Adrenal gland (tissue), 19 donors: ENCODE measurements at regions of chr7 and their contacts with region 1.

Region 1: DNA sequence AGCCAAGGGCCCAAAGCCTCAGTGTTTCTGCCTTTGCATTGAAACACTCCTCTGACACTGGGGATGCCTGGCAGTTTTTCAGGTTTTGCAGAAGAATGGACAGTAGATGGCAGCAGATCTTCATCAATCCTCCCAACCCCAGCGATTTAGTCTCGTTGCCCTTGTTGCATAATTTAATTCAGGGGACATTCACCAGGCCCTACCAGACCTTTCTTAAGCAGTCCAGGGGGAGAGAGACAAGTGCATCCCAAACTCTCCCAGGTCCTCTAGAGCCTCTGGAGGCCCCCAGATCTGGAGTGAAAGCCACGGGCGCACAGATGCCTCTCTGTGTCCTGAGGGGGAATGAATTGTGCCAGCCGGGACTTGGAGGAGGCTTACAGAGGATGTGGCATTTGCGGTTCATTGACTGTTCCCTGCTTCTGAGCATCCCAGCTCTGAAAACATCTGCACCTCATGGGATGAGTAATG is 29.6 kb downstream of the MINDY4 start:
- DNase-seq: peak; percentile 60 to 86 (median 65)
- H3K4me3 ChIP-seq: no peak overlapping the region
- H3K27ac ChIP-seq: peak overlapping the region in 2 of 5 donors; percentile 6 to 34
- H3K4me1 ChIP-seq: peaks cover 0 to 16% of the 10 kb centered on the region in 2 donors
- H3K27me3 ChIP-seq: no peaks in the 10 kb centered on the region
- CTCF ChIP-seq: peak; percentile 38 to 84 (median 78)
- POLR2A ChIP-seq: no peak

Region 2: DNA sequence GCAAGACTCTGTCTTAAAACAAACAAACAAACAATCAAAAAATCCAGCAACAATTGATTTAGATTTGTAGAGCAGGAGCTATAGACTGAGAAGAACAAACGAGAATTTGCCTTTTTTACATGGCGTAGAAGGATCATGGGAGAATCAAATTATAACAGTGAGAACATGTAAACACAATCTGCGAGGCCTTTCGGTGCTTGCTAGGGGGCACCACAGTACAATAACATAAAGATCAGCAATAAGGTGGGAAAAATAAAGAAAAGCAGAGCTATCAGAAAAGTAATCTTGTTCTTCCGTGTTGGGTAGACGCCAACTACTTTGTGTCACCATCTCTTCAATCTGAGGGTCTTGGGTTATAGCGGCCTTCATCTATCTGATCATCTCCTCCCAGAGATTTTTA is 404.4 kb before region 1 on chr7:
- intact Hi-C with region 1: no loop called
- DNase-seq: no peak
- H3K4me3 ChIP-seq: no peak overlapping the region
- H3K27ac ChIP-seq: no peak overlapping the region
- H3K4me1 ChIP-seq: no peaks in the 10 kb centered on the region
- H3K27me3 ChIP-seq: no peaks in the 10 kb centered on the region
- CTCF ChIP-seq: peak in 2 of 6 experiments; percentile 7 to 11
- POLR2A ChIP-seq: no peak

Region 3: GRCh38 chr7:30938435-30939316 is 137.9 kb after region 1 on chr7:
- intact Hi-C with region 1: loop called in 1 of 2 experiments (anchors 10 kb)
- DNase-seq: peak; percentile 67 to 92 (median 78)
- H3K4me3 ChIP-seq: no peak overlapping the region
- H3K27ac ChIP-seq: no peak overlapping the region
- H3K4me1 ChIP-seq: no peaks in the 10 kb centered on the region
- H3K27me3 ChIP-seq: peaks cover 5% of the 10 kb centered on the region
- CTCF ChIP-seq: peak; percentile 77 to 98 (median 87)
- POLR2A ChIP-seq: no peak

Region 4: DNA sequence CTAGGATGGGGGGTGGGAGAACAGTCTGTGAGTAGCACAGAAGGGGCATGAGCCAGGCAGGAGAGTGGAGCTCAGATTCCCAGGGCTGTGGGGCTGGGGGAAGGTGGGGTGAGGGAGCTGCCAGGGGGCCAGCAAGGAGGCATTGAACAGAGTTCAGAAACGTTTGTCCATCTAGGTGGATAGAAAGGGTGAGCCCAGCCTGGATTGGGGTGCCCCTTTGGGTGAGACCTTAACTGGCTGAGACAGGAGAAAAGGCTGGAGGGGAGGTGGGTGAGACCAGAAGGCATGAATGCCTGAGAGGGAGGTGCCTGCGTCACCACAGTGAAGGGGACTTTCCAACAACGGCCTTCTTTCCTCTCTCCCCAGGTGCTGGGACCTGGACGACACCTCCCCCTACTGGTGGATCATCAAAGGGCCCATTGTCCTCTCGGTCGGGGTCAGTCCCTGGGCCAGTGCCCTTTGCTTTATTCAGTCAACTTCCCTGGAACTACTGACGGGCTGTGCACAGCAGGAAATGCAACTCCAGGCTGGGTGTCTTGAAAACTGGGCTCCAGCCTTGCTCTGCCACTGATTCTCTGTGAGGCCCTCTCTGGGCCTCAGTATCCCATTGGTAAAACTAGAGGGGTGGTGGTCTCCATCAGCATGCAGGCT is 173.9 kb after region 1 on chr7:
- intact Hi-C with region 1: loop called (anchors 5 kb)
- DNase-seq: peak in 6 of 7 donors; percentile 34 to 77 (median 58)
- H3K4me3 ChIP-seq: no peak overlapping the region
- H3K27ac ChIP-seq: no peak overlapping the region
- H3K4me1 ChIP-seq: no peaks in the 10 kb centered on the region
- H3K27me3 ChIP-seq: peaks cover 3% of the 10 kb centered on the region
- CTCF ChIP-seq: peak; percentile 28 to 57 (median 48)
- POLR2A ChIP-seq: no peak

Region 5: DNA sequence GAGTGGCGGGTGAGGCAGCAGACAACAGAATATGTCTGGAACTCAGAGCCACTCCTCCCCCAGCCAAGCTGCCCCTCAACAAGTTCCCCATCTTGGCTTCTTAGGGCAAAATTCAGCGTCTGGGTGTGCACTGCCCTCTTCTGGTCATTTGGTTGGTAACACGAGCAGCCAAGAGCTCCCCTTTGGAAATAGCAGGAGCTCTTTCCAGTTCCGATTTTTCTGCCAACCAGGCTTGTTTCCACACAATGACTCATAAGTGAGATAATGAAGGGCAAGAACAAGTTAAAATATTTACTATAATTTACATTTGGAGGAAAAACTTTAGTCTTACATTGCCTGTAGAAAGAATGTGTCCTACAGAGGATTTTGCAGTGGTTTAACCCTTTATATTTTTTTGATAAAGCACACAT is 321.8 kb after region 1 on chr7:
- intact Hi-C with region 1: loop called (anchors 5 kb)
- DNase-seq: peak; percentile 74 to 90 (median 79)
- H3K4me3 ChIP-seq: no peak overlapping the region
- H3K27ac ChIP-seq: no peak overlapping the region
- H3K4me1 ChIP-seq: peaks cover 0 to 13% of the 10 kb centered on the region in 2 donors
- H3K27me3 ChIP-seq: no peaks in the 10 kb centered on the region
- CTCF ChIP-seq: peak; percentile 66 to 91 (median 88)
- POLR2A ChIP-seq: no peak